ENCODE measurements at regions of chr7 and their contacts with region 1.

Region 1: DNA sequence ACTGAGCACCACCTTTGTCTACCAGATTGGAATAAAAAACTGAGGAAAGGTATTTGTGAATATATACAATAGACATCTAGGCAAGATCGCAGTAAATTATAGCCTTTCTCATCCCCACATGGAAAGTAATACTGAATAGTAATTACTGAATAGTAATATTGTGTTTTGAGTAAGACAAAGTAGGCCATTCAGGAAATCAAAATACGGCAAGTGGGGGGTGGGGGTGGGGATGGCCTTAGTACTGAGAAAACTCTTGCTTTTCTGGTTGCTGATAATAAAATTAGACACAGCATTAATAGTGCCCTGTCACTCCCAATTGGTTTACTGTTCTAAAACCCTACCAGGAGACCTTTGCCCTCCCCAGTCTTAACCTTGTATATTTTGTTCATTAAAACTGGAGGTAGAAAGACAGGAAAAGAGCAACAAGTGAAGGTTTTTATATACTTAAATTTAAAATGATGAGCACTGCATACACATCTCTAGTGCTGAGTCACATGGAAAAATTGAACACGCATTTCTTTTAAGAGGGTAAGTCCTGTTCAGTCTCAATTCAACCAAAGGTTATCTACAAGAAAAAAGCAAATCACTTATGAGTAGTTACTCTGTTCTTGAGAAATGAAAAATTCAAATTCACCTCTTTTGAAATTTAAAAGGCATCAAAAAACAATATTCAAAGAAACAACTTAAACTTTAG is 65.6 kb downstream of the IGF2BP3 start:
- DNase-seq: peak in 1 of 2 experiments; percentile 33
- H3K4me3 ChIP-seq: no peak overlapping the region
- H3K27ac ChIP-seq: peak overlapping the region; percentile 10; the same call in 1 of the 2 replicates
- H3K4me1 ChIP-seq: peaks cover 29% of the 10 kb centered on the region
- H3K27me3 ChIP-seq: no peaks in the 10 kb centered on the region
- CTCF ChIP-seq: no peak

Region 2: GRCh38 chr7:23597094-23598091 is 192.7 kb after region 1 on chr7 and contains the start of gene CCDC126:
- CTCF ChIA-PET with region 1: interaction called, 11 read pairs
- POLR2A ChIA-PET with region 1: no interaction called
- intact Hi-C with region 1: no loop called
- DNase-seq: peak; percentile 87 to 95
- H3K4me3 ChIP-seq: peak within 1 kb of the TSS; percentile 66
- H3K27ac ChIP-seq: peak within 1 kb of the TSS; percentile 58
- H3K4me1 ChIP-seq: peaks cover 40% of the 10 kb centered on the region
- H3K27me3 ChIP-seq: no peaks in the 10 kb centered on the region
- CTCF ChIP-seq: no peak
- total RNA-seq, gene CCDC126: 5.9 and 6.2 TPM in 2 replicates

Measured in PC-9 (cell line).